Endothelial cell of umbilical vein (primary cell): ENCODE measurements at regions of chr6 and their contacts with region 1.

Region 1: DNA sequence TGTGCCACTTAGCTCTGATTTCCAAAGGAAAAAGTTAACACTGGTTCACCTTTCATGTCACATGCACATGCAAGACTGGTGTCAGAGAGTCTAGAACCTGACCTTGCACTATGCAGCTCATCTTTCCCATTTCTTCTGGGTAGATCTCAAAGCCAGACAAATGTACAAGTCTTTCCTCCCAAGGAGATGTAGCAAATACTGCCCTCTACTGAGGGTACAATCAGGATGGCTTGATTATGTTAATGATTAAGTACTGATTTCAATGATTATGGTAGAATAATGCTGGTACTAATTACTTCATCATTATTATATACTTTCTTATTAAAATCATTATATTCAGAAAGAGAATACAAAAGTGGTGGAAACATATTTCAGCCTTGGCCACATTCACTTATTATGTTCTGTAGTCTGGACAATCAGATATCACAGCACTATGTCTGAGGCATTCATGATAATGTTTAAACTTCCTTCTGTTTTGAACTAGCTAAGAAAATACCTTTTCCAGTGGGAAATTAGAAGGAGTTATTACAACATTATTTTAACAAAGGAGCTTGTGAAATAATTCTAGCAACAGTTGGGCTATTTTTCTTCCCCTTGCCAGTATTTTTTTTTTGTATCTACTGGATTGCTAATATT is 68.5 kb upstream of the FOXO3 start:
- DNase-seq: peak; percentile 77
- H3K4me3 ChIP-seq: no peak overlapping the region
- H3K27ac ChIP-seq: no peak overlapping the region
- H3K4me1 ChIP-seq: no peaks in the 10 kb centered on the region
- H3K27me3 ChIP-seq: no peaks in the 10 kb centered on the region
- CTCF ChIP-seq: peak; percentile 47 to 54
- POLR2A ChIP-seq: no peak

Region 2: GRCh38 chr6:108113557-108114519 is 378.4 kb before region 1 on chr6:
- CTCF ChIA-PET with region 1: interaction called, 212 read pairs
- POLR2A ChIA-PET with region 1: no interaction called
- dilution Hi-C with region 1: no loop called
- intact Hi-C with region 1: loop called (anchors 1 kb)
- DNase-seq: peak; percentile 67
- H3K4me3 ChIP-seq: no peak overlapping the region
- H3K27ac ChIP-seq: no peak overlapping the region
- H3K4me1 ChIP-seq: peaks cover 24% of the 10 kb centered on the region
- H3K27me3 ChIP-seq: peaks cover 57 to 70% of the 10 kb centered on the region in 2 experiments
- CTCF ChIP-seq: peak; percentile 16 to 32
- POLR2A ChIP-seq: no peak

Region 3: GRCh38 chr6:108200631-108201030 is 291.6 kb before region 1 on chr6:
- CTCF ChIA-PET with region 1: interaction called, 15 read pairs
- POLR2A ChIA-PET with region 1: no interaction called
- dilution Hi-C with region 1: no loop called
- intact Hi-C with region 1: no loop called
- DNase-seq: no peak
- H3K4me3 ChIP-seq: no peak overlapping the region
- H3K27ac ChIP-seq: no peak overlapping the region
- H3K4me1 ChIP-seq: no peaks in the 10 kb centered on the region
- H3K27me3 ChIP-seq: no peaks in the 10 kb centered on the region
- CTCF ChIP-seq: no peak
- POLR2A ChIP-seq: no peak

Region 4: DNA sequence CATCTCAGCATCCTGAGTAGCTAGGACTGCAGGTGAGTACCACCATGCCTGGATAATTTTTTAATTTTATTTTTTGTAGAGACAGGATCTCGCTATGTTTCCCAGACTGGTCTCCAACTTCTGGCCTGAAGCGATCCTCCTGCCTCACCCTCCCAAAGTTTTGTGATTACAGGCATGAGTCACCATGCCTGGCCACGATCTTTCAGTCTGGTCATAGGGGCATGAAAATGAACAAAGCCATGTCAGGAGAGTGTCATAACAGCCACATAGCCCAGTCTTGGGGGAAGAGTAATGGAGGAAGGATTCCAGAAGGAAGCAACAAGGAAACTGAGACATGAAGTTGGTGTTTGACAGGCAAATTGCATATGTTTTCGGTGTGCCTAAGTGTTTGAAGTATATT is 214.4 kb before region 1 on chr6:
- CTCF ChIA-PET with region 1: interaction called, 10 read pairs
- POLR2A ChIA-PET with region 1: no interaction called
- dilution Hi-C with region 1: no loop called
- intact Hi-C with region 1: no loop called
- DNase-seq: no peak
- H3K4me3 ChIP-seq: no peak overlapping the region
- H3K27ac ChIP-seq: no peak overlapping the region
- H3K4me1 ChIP-seq: no peaks in the 10 kb centered on the region
- H3K27me3 ChIP-seq: no peaks in the 10 kb centered on the region
- CTCF ChIP-seq: no peak
- POLR2A ChIP-seq: no peak

Region 5: DNA sequence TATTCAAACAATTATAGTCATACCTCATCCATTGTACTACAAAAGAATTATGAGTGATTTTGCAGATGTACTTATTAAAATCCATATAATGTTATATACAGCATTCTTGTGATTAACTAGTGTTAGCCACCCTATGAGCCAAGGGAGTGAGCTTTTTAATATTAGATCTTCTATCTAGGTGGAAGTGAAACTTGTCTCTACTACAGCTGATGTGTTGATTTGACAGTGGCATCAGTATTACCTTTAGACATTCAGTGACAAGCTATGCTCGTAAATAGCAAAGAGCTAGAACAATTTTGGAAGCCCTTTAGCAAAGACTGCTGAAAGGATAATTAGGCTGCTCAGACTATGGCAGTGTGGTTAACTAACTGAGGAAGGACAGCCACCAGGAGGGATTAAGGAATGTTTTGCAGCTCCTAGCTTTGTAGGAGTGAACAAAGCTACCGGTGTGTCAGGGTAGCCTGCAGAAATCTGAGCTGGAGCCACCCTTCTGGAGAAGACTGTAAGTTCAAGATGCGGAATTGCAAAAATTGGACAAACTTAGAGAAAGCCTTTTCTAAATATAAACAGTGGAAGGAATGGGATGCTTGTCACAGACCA is 123.7 kb before region 1 on chr6:
- CTCF ChIA-PET with region 1: interaction called, 54 read pairs
- POLR2A ChIA-PET with region 1: no interaction called
- dilution Hi-C with region 1: no loop called
- intact Hi-C with region 1: loop called (anchors 1 kb)
- DNase-seq: no peak
- H3K4me3 ChIP-seq: no peak overlapping the region
- H3K27ac ChIP-seq: no peak overlapping the region
- H3K4me1 ChIP-seq: no peaks in the 10 kb centered on the region
- H3K27me3 ChIP-seq: no peaks in the 10 kb centered on the region
- CTCF ChIP-seq: no peak
- POLR2A ChIP-seq: no peak

Region 6: GRCh38 chr6:108453597-108454185 is 38.6 kb before region 1 on chr6:
- CTCF ChIA-PET with region 1: interaction called, 29 read pairs
- POLR2A ChIA-PET with region 1: no interaction called
- dilution Hi-C with region 1: no loop called
- intact Hi-C with region 1: loop called (anchors 1 kb)
- DNase-seq: peak; percentile 91
- H3K4me3 ChIP-seq: peak overlapping the region in 1 of 3 experiments; percentile 4
- H3K27ac ChIP-seq: peak overlapping the region; percentile 94
- H3K4me1 ChIP-seq: peaks cover 32% of the 10 kb centered on the region
- H3K27me3 ChIP-seq: no peaks in the 10 kb centered on the region
- CTCF ChIP-seq: no peak
- POLR2A ChIP-seq: no peak